ENCODE measurements at regions of chr5 and their contacts with region 1.

Region 1: DNA sequence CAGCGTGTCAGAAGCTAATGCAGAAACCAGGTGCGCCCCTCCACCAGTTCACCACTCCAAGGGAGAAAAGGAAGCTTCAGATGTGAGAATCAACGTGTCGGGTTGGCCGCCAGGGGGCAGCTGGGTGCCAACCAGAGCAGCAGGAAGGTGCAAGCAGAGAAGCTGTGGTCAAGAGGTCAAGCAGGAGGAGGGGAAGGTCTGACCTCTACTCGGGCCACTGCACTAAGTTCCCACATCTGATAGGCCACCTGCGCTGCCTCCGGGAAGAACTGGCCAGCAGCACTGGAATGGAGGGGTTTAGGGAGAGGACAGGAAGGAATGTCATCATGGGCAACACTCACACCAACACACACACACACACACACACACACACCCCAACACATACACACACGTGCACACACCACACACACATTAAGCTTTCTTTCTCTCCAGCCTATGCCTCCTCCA is 31.4 kb downstream of the ANXA6 start:
- DNase-seq: peak; percentile 61
- ATAC-seq: no peak
- H3K4me3 Mint-ChIP-seq: peak overlapping the region; percentile 79
- H3K27ac Mint-ChIP-seq: peak overlapping the region; percentile 95
- H3K4me1 Mint-ChIP-seq: peaks cover 89% of the 10 kb centered on the region
- H3K27me3 Mint-ChIP-seq: no peaks in the 10 kb centered on the region
- CTCF ChIP-seq: no peak

Region 2: DNA sequence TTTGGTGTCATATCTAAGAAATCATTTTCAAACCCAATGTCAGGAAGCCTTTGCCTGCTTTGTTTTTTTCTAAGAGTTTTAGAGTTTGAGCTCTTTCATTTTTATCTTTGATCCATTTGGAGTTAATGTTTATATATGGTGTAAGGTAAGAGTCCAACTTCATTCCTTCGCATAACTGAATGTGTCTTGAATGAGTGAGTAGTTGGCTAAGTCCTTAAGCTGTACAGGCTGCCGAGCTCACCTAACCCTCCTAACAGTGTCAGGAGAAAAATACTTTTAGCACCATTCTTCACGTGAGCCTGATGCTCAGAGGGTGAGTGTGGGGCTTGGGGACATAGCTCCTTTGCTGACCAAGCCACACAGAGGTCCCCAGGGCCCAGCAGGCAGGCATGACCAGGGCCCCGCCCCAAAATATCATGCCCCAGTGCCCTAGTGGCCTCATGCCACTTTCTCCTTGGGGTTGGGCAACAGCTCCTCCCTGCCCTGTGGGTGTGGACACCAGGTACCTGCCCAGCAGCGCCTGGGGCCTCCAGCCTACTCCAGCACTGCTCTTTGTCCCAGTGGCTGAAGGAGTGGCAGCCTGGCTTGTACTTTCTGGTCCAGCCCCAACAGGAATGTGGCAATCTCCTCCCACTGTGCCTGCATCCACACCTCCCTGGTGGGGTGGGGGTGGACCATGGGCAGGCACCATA is 1378.9 kb before region 1 on chr5:
- CTCF ChIA-PET with region 1: no interaction called
- POLR2A ChIA-PET with region 1: no interaction called
- intact Hi-C with region 1: no loop called
- DNase-seq: no peak
- ATAC-seq: no peak
- H3K4me3 Mint-ChIP-seq: no peak overlapping the region
- H3K27ac Mint-ChIP-seq: no peak overlapping the region
- H3K4me1 Mint-ChIP-seq: peaks cover 23% of the 10 kb centered on the region
- H3K27me3 Mint-ChIP-seq: no peaks in the 10 kb centered on the region
- CTCF ChIP-seq: no peak

Region 3: GRCh38 chr5:150317048-150318003 is 808.9 kb before region 1 on chr5:
- CTCF ChIA-PET with region 1: no interaction called
- POLR2A ChIA-PET with region 1: no interaction called
- intact Hi-C with region 1: no loop called
- DNase-seq: no peak
- ATAC-seq: no peak
- H3K4me3 Mint-ChIP-seq: no peak overlapping the region
- H3K27ac Mint-ChIP-seq: no peak overlapping the region
- H3K4me1 Mint-ChIP-seq: no peaks in the 10 kb centered on the region
- H3K27me3 Mint-ChIP-seq: peaks cover 12% of the 10 kb centered on the region
- CTCF ChIP-seq: no peak

Region 4: GRCh38 chr5:151063142-151063949 is 62.9 kb before region 1 on chr5:
- CTCF ChIA-PET with region 1: interaction called, 6 read pairs
- POLR2A ChIA-PET with region 1: interaction called, 13 read pairs
- intact Hi-C with region 1: loop called (anchors 1 kb)
- DNase-seq: no peak
- ATAC-seq: no peak
- H3K4me3 Mint-ChIP-seq: peak overlapping the region; percentile 53
- H3K27ac Mint-ChIP-seq: peak overlapping the region; percentile 89
- H3K4me1 Mint-ChIP-seq: peaks cover 99% of the 10 kb centered on the region
- H3K27me3 Mint-ChIP-seq: no peaks in the 10 kb centered on the region
- CTCF ChIP-seq: no peak

Region 5: GRCh38 chr5:151115274-151115905 is 10.8 kb before region 1 on chr5:
- CTCF ChIA-PET with region 1: interaction called, 82 read pairs
- POLR2A ChIA-PET with region 1: interaction called, 15 read pairs
- intact Hi-C with region 1: loop called (anchors 1 kb)
- DNase-seq: peak; percentile 70
- ATAC-seq: peak; percentile 80
- H3K4me3 Mint-ChIP-seq: no peak overlapping the region
- H3K27ac Mint-ChIP-seq: peak overlapping the region; percentile 12
- H3K4me1 Mint-ChIP-seq: peaks cover 26% of the 10 kb centered on the region
- H3K27me3 Mint-ChIP-seq: no peaks in the 10 kb centered on the region
- CTCF ChIP-seq: peak; percentile 78

Region 6: DNA sequence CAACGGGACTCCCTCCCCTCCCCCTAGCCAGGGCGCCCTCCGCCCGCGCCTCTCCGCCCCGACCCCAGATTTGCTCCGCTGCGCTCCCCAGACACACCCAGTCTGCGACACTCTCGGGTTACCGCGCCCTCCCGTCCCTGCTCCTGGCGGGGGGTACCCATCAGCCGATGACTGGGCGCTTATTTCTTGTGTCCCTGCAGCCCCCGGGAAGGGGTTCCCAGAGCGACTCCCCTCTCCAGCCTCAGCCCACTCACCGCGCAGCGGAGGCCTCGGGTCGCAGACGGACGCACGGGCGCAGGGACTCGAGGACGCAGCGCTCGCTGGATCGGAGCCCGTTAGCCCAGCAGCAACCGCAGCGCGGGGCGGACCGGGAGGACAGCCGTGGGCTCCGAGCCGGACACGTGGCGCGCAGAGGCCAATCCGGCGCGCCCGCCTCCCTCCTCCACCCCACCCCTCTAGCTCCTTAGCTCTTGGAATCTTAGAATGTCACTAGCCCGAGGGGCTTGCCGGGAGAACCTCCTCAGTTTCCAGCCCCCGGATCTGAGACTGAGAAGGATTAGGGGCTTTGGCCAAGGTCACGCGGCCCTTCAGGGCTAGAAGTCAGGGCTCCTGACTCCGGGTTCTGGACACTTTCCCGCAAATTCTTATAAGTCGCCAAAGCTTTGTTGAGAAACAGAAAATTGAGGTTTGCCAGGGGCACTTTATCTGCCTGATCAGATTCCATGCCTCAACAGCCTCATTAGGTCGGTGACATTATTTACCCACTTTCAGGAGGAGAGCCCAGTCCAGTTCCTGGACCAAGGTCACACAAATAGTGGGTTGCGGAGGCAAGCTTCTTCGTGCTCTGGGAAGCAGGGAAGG is 31.4 kb after region 1 on chr5 and contains the start of gene ANXA6:
- CTCF ChIA-PET with region 1: interaction called, 309 read pairs
- POLR2A ChIA-PET with region 1: interaction called, 47 read pairs
- intact Hi-C with region 1: loop called (anchors 1 kb)
- DNase-seq: peak; percentile 62
- ATAC-seq: peak; percentile 72
- H3K4me3 Mint-ChIP-seq: peak within 1 kb of the TSS; percentile 91
- H3K27ac Mint-ChIP-seq: peak within 1 kb of the TSS; percentile 94
- H3K4me1 Mint-ChIP-seq: peaks cover 77% of the 10 kb centered on the region
- H3K27me3 Mint-ChIP-seq: no peaks in the 10 kb centered on the region
- CTCF ChIP-seq: no peak
- total RNA-seq, gene ANXA6: 367 and 379 TPM in 2 replicates

Region 7: GRCh38 chr5:151196556-151197290 is 70.5 kb after region 1 on chr5:
- CTCF ChIA-PET with region 1: interaction called, 6 read pairs
- POLR2A ChIA-PET with region 1: interaction called, 11 read pairs
- intact Hi-C with region 1: loop called (anchors 1 kb)
- DNase-seq: peak; percentile 31
- ATAC-seq: peak; percentile 95
- H3K4me3 Mint-ChIP-seq: peak overlapping the region; percentile 29
- H3K27ac Mint-ChIP-seq: peak overlapping the region; percentile 84
- H3K4me1 Mint-ChIP-seq: peaks cover 75% of the 10 kb centered on the region
- H3K27me3 Mint-ChIP-seq: no peaks in the 10 kb centered on the region
- CTCF ChIP-seq: no peak

Region 8: DNA sequence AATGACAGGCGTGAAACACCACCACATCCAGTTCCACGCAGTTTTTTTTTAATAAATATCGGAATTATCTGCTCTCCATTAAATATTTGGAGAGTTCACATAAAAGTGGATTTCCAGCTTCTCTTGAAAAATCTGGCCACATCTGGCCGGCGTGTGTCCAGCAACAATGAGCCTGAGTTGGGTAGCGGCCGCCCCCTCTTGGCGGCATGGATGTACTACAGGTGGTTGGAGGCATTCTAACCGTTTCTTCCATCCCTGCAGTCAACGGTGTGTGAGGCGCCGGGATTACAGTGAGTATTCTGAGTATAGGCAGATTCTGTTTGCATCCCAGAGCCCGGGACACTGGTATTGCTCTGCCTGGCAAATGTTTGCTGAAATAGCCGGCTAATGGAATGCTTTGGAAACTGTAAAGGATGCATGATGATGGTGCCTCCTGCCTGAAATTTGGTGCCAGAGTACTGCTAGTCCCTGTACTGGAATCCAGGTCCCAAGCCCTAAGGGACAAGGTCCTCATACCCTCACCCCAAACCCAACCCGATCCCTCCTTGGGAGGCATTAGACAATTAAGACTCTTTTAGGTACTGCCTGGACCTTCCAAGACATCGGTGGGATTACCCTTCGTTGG is 113.1 kb after region 1 on chr5:
- CTCF ChIA-PET with region 1: interaction called, 95 read pairs
- POLR2A ChIA-PET with region 1: interaction called, 39 read pairs
- intact Hi-C with region 1: loop called (anchors 1 kb)
- DNase-seq: peak; percentile 58
- ATAC-seq: peak; percentile 60
- H3K4me3 Mint-ChIP-seq: peak overlapping the region; percentile 77
- H3K27ac Mint-ChIP-seq: peak overlapping the region; percentile 72
- H3K4me1 Mint-ChIP-seq: peaks cover 95% of the 10 kb centered on the region
- H3K27me3 Mint-ChIP-seq: no peaks in the 10 kb centered on the region
- CTCF ChIP-seq: peak; percentile 85

Region 9: GRCh38 chr5:151315998-151316597 is 189.9 kb after region 1 on chr5:
- CTCF ChIA-PET with region 1: interaction called, 16 read pairs
- POLR2A ChIA-PET with region 1: interaction called, 3 read pairs
- intact Hi-C with region 1: loop called (anchors 1 kb)
- DNase-seq: peak; percentile 40
- ATAC-seq: peak; percentile 83
- H3K4me3 Mint-ChIP-seq: no peak overlapping the region
- H3K27ac Mint-ChIP-seq: no peak overlapping the region
- H3K4me1 Mint-ChIP-seq: peaks cover 11% of the 10 kb centered on the region
- H3K27me3 Mint-ChIP-seq: peaks cover 5% of the 10 kb centered on the region
- CTCF ChIP-seq: peak; percentile 64

Region 10: GRCh38 chr5:151447174-151448037 is 321.2 kb after region 1 on chr5 and contains the start of gene SLC36A1:
- CTCF ChIA-PET with region 1: no interaction called
- POLR2A ChIA-PET with region 1: no interaction called
- intact Hi-C with region 1: no loop called
- DNase-seq: peak; percentile 94
- ATAC-seq: peak; percentile 95
- H3K4me3 Mint-ChIP-seq: peak within 1 kb of the TSS; percentile 87
- H3K27ac Mint-ChIP-seq: peak within 1 kb of the TSS; percentile 89
- H3K4me1 Mint-ChIP-seq: peaks cover 24% of the 10 kb centered on the region
- H3K27me3 Mint-ChIP-seq: peaks cover 19% of the 10 kb centered on the region
- CTCF ChIP-seq: peak; percentile 88
- total RNA-seq, gene SLC36A1: 9.9 and 14.1 TPM in 2 replicates

Measured in activated B cell treated with CpG ODN at 0.5 μM for 24 hours (primary cell).